ENCODE measurements at regions of chr11 and their contacts with region 1.

Region 1: DNA sequence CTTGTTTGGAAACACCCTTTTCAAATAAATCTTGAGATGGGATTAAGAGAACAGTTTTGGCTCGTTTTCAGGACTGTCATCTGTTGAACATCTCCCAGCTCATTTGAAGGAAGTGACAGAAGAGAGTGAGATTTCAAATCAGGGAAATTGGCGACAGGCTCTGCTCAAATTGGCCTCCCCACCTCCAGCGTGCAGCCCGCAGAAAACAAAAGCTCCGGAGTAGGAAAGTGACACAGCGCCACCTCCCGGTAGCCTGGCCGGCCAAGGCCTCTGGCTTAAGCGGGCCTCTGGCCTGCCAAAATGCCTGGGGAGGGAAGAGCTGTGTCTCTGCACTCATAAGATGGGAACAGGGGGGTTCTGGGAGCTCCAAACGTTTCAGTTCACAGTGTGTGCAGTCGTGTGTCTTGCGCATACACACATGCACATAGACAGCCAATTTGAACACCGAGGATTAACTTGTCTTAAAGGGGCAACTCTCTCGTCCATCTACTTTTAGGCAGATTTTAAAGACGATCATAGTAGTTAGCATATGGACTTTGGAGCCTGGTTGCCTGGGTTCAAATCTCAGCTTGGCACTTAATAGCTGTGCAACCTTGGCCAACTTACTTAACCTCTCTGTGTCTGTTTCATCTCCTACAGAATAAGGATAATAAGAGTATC is 132.7 kb upstream of the RCN1 start:
- DNase-seq: peak; percentile 56 to 80
- ATAC-seq: peak; percentile 84 to 93 (median 87)
- H3K4me3 ChIP-seq: no peak overlapping the region
- H3K27ac ChIP-seq: no peak overlapping the region
- H3K4me1 ChIP-seq: peaks cover 0 to 8% (median 0%) of the 10 kb centered on the region in 9 donors
- H3K27me3 ChIP-seq: no peaks in the 10 kb centered on the region
- CTCF ChIP-seq: peak; percentile 49 to 88 (median 78)

Region 2: GRCh38 chr11:31107062-31107461 is 851.1 kb before region 1 on chr11:
- intact Hi-C with region 1: loop called in 1 of 10 experiments (anchors 5 kb)
- DNase-seq: peak; percentile 24 to 49
- ATAC-seq: peak in 5 of 8 donors; percentile 38 to 69 (median 67)
- H3K4me3 ChIP-seq: no peak overlapping the region
- H3K27ac ChIP-seq: no peak overlapping the region
- H3K4me1 ChIP-seq: no peaks in the 10 kb centered on the region
- H3K27me3 ChIP-seq: peaks cover 0 to 4% (median 0%) of the 10 kb centered on the region in 7 donors
- CTCF ChIP-seq: peak; percentile 12 to 77 (median 72)

Region 3: DNA sequence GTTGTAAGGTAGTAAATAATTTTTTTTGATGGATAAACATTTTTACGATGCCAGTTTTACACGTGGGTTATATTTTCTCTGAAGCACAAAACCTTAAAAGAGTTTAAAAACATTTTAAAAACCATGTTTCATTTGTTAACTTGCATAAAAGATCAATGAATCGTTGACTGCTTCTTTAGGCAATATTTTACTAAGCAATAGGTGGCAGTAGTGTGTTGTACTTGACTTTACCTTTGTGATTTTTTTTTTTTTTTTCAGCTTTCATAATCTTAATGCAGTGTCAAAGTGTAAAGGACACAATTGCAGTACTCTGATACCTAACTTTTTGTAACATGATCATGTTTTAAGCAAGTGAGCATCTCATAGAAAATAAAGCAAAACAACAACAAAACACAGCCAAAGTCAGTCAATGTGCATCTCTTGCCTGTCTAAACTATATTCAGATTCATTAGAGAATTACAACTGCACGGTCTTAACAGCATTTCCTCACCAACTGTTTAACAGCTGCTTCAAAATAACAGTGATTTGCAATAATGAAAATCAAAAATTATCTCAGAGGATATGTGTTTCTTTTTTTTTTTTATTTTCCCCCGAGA is 560.9 kb before region 1 on chr11:
- intact Hi-C with region 1: loop called in 4 of 10 experiments (anchors 5 kb)
- DNase-seq: no peak
- ATAC-seq: no peak
- H3K4me3 ChIP-seq: no peak overlapping the region
- H3K27ac ChIP-seq: no peak overlapping the region
- H3K4me1 ChIP-seq: no peaks in the 10 kb centered on the region
- H3K27me3 ChIP-seq: no peaks in the 10 kb centered on the region
- CTCF ChIP-seq: peak; percentile 17 to 73 (median 58)

Region 4: GRCh38 chr11:31628111-31628510 is 330.1 kb before region 1 on chr11:
- intact Hi-C with region 1: loop called in 1 of 10 experiments (anchors 5 kb)
- DNase-seq: no peak
- ATAC-seq: no peak
- H3K4me3 ChIP-seq: no peak overlapping the region
- H3K27ac ChIP-seq: no peak overlapping the region
- H3K4me1 ChIP-seq: no peaks in the 10 kb centered on the region
- H3K27me3 ChIP-seq: no peaks in the 10 kb centered on the region
- CTCF ChIP-seq: no peak

Region 5: GRCh38 chr11:31655483-31655882 is 302.7 kb before region 1 on chr11:
- intact Hi-C with region 1: loop called in 1 of 10 experiments (anchors 10 kb)
- DNase-seq: no peak
- ATAC-seq: no peak
- H3K4me3 ChIP-seq: no peak overlapping the region
- H3K27ac ChIP-seq: no peak overlapping the region
- H3K4me1 ChIP-seq: no peaks in the 10 kb centered on the region
- H3K27me3 ChIP-seq: no peaks in the 10 kb centered on the region
- CTCF ChIP-seq: no peak

Region 6: GRCh38 chr11:31995525-31996094 is 37.4 kb after region 1 on chr11:
- intact Hi-C with region 1: no loop called
- DNase-seq: no peak
- ATAC-seq: no peak
- H3K4me3 ChIP-seq: no peak overlapping the region
- H3K27ac ChIP-seq: no peak overlapping the region
- H3K4me1 ChIP-seq: no peaks in the 10 kb centered on the region
- H3K27me3 ChIP-seq: peaks cover 0 to 46% (median 17%) of the 10 kb centered on the region in 7 donors
- CTCF ChIP-seq: no peak

Region 7: DNA sequence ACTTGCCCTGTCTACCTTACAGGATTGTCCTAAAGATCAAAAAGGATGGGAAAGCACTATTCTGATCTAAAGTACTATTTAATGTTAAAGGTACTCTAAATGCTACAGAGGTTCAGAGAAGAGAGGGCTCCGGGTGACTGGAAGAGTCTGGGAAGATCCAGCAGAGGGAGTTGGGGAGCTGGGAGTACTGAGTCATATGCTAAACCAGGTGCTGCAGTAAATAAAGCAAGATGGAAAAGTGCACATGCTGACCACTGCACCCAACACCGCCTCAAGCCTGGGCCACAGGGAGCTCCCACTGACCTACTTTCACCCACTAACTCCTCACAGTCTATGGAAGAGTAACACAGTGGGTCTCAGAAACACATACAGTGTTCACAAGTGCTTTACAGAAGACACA is 427.8 kb after region 1 on chr11:
- intact Hi-C with region 1: no loop called
- DNase-seq: peak in 1 of 2 donors; percentile 31
- ATAC-seq: peak; percentile 60 to 90 (median 78)
- H3K4me3 ChIP-seq: no peak overlapping the region
- H3K27ac ChIP-seq: peak overlapping the region in 3 of 10 donors; percentile 14 to 52 (median 35)
- H3K4me1 ChIP-seq: peaks cover 3 to 25% (median 12%) of the 10 kb centered on the region in 9 donors
- H3K27me3 ChIP-seq: peaks cover 0 to 4% (median 0%) of the 10 kb centered on the region in 7 donors
- CTCF ChIP-seq: peak; percentile 15 to 70 (median 52)

Measured in heart right ventricle (tissue), 16 donors.